Thyroid gland (tissue), 4 donors: ENCODE measurements at regions of chr16 and their contacts with region 1.

Region 1: DNA sequence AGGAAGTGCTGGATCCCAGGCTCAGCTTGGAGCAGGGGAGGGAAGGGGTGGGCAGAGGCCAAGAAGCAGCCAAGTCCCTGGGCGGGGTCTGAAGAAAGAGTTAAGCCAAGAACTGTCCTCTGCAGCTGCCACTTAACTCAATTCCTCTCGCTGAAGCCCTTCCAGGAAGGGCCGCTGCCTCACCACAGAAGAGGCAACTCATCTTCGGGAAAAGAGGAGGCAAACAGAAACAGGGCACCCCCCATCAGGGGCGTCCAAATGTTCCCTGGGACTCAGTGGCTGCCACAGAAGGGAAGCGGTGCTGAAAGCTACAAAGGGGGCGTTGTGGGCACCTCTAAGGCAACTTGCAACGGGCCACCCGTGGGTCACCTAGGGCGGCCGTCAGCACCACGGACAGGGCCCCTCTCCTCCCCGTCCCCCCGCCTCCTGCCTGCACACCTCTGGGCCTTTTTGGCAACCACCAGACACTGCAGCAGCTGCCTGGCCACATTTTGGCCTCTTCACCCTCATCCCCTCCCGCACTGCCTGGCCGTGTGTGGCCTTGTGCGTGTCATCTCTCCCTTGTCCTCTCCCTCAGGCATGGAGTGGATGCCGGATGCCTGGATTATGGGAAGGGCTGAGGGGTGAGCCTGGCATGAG is 2.5 kb downstream of the TLCD3B start:
- DNase-seq: peak; percentile 27 to 31
- H3K4me3 ChIP-seq: no peak overlapping the region
- H3K27ac ChIP-seq: no peak overlapping the region
- H3K4me1 ChIP-seq: peaks cover 0 to 5% of the 10 kb centered on the region in 2 donors
- H3K27me3 ChIP-seq: peaks cover 15% of the 10 kb centered on the region
- CTCF ChIP-seq: no peak
- POLR2A ChIP-seq: no peak

Region 2: GRCh38 chr16:29831490-29831889 is 197.1 kb before region 1 on chr16:
- intact Hi-C with region 1: loop called (anchors 10 kb)
- DNase-seq: no peak
- H3K4me3 ChIP-seq: no peak overlapping the region
- H3K27ac ChIP-seq: no peak overlapping the region
- H3K4me1 ChIP-seq: peaks cover 0 to 3% of the 10 kb centered on the region in 2 donors
- H3K27me3 ChIP-seq: no peaks in the 10 kb centered on the region
- CTCF ChIP-seq: no peak
- POLR2A ChIP-seq: no peak

Region 3: DNA sequence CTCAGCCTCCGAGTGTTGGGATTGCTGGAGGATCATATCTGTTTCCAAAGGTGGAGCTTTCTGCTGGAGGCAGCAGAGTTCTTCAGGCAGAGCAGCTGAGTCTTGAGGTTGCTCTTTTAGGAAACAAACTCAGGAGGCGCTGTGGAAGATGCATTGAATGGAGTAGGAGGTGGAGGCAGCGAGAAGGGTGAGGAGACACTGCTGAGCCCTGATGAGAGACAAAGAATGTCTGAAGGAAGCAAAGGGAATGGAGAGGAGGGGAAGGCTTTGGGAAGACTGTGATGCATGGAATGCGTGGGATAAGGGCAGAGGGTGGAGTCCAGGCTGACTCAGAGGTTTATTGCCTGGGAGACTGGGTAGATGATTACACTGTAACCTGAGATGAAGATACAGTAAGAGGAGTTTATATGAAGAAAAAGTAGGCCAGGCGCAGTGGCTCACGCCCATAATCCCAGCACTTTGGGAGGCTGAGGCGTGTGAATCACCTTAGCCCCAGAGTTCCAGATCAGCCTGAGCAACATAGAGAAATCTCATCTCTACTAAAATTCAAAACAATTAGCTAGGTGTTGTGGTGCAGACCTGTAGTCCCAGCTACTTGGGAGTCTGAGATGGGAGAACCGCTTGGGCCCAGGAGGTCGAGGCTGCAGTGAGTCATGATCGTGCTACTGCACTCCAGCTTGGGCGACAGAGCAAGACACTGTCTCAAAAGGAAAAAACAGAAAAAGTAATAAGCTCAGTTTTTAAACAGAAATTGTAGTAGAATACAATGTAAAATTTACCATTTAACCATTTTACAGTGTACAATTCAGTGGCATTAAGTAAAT is 84.5 kb before region 1 on chr16:
- intact Hi-C with region 1: no loop called
- DNase-seq: no peak
- H3K4me3 ChIP-seq: no peak overlapping the region
- H3K27ac ChIP-seq: no peak overlapping the region
- H3K4me1 ChIP-seq: no peaks in the 10 kb centered on the region
- H3K27me3 ChIP-seq: no peaks in the 10 kb centered on the region
- CTCF ChIP-seq: no peak
- POLR2A ChIP-seq: no peak

Region 4: DNA sequence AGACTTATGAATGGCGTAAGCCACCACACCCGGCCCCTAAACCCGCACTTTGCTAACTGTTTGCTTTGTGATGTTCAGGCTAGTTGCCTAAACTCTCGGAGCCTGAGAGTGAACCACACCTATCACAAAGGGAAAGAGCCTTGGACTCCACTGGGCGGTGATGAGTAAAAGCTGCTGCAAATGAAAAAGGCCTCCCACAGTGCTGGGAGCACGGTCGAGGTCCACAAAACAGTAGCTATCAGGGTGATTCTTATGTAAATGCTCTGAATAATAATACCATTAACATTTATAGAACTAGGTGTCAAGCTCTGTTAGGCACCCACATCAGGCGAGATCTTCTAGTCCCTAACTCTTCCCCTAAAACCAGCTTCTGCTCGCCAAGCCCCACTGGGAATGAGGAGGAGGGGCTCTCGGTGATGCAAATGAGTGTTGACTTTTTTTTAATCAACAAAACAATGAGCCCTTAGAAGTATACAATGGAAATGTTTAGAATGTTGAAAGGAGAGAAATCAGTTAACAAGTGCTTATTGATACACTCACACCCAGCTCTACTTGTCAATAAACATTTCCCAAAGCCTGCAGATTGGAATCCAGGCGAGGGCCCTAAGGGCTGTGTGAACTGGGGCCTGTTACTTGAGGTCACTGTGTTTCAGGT is 649.5 kb after region 1 on chr16:
- intact Hi-C with region 1: no loop called
- DNase-seq: no peak
- H3K4me3 ChIP-seq: no peak overlapping the region
- H3K27ac ChIP-seq: no peak overlapping the region
- H3K4me1 ChIP-seq: no peaks in the 10 kb centered on the region
- H3K27me3 ChIP-seq: no peaks in the 10 kb centered on the region
- CTCF ChIP-seq: no peak
- POLR2A ChIP-seq: no peak